GM12878 (cell line): ENCODE measurements at regions of chr3 and their contacts with region 1.

Region 1: GRCh38 chr3:28012830-28013229 is 228.6 kb upstream of the CMC1 start:
- DNase-seq: no peak
- ATAC-seq: no peak
- H3K4me3 ChIP-seq: no peak overlapping the region
- H3K27ac ChIP-seq: no peak overlapping the region
- H3K4me1 ChIP-seq: no peaks in the 10 kb centered on the region
- H3K27me3 ChIP-seq: no peaks in the 10 kb centered on the region
- CTCF ChIP-seq: no peak
- EP300 ChIP-seq: no peak
- POLR2A ChIP-seq: no peak
- RAD21 ChIP-seq: no peak

Region 2: DNA sequence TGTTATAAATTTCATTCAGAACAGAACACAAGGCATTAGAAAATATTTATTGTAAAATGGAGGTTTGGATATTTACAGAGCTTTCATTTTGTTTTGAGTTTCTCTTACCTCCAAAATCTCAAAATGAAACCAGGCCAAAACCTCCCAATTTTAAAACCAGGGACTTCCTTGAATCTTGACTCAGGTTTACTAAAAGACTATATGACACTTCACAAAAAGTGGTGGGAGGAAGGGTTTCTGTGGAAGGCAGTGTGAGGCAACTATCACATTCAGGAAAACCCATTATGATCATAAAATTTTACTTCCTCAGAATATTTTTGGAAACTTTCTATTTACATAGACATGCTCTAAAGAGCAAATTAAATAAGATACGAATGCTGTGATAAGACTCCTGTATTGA is 84.9 kb before region 1 on chr3:
- CTCF ChIA-PET with region 1: interaction called, 6 read pairs
- POLR2A ChIA-PET with region 1: interaction called, 7 read pairs
- RAD21 ChIA-PET with region 1: interaction called, 25 read pairs
- SMC1A ChIA-PET with region 1: interaction called, 20 read pairs
- in situ Hi-C with region 1: no loop called
- intact Hi-C with region 1: loop called (anchors 5 kb)
- DNase-seq: peak; percentile 4
- ATAC-seq: peak; percentile 36
- H3K4me3 ChIP-seq: no peak overlapping the region
- H3K27ac ChIP-seq: no peak overlapping the region
- H3K4me1 ChIP-seq: no peaks in the 10 kb centered on the region
- H3K27me3 ChIP-seq: no peaks in the 10 kb centered on the region
- CTCF ChIP-seq: no peak
- EP300 ChIP-seq: no peak
- POLR2A ChIP-seq: no peak
- RAD21 ChIP-seq: no peak

Region 3: GRCh38 chr3:28022916-28023315 is 10.1 kb after region 1 on chr3:
- CTCF ChIA-PET with region 1: interaction called, 8 read pairs
- POLR2A ChIA-PET with region 1: interaction called, 4 read pairs
- RAD21 ChIA-PET with region 1: interaction called, 21 read pairs
- SMC1A ChIA-PET with region 1: interaction called, 10 read pairs
- in situ Hi-C with region 1: no loop called
- intact Hi-C with region 1: no loop called
- DNase-seq: no peak
- ATAC-seq: 0 out of 3 replicates have a peak, but pooled peaks have one; percentile 8
- H3K4me3 ChIP-seq: no peak overlapping the region
- H3K27ac ChIP-seq: no peak overlapping the region
- H3K4me1 ChIP-seq: no peaks in the 10 kb centered on the region; the same call in 1 of the 2 replicates
- H3K27me3 ChIP-seq: no peaks in the 10 kb centered on the region
- CTCF ChIP-seq: no peak
- EP300 ChIP-seq: no peak
- POLR2A ChIP-seq: no peak
- RAD21 ChIP-seq: no peak

Region 4: DNA sequence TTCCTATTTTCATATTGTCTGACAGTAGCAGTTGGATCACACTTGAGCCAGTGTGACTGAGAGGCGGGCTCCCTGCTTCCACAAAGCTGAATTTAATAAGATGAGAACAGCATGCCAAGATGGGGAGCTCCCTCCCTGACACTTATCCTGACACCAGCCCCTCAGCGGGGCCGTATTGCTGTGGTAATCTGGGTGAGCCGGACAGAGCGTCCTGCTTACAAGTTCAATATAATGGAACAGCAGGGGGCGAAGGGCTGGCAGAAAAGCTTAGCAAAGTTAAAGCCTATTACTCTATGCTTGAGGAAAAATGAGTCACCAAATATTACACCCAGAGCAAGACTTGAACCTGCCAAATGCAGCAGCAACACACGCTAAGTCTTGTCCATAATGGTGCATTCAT is 64.7 kb after region 1 on chr3:
- CTCF ChIA-PET with region 1: interaction called, 9 read pairs
- POLR2A ChIA-PET with region 1: interaction called, 6 read pairs
- RAD21 ChIA-PET with region 1: interaction called, 9 read pairs
- SMC1A ChIA-PET with region 1: interaction called, 13 read pairs
- in situ Hi-C with region 1: no loop called
- intact Hi-C with region 1: no loop called
- DNase-seq: no peak
- ATAC-seq: no peak
- H3K4me3 ChIP-seq: no peak overlapping the region
- H3K27ac ChIP-seq: no peak overlapping the region
- H3K4me1 ChIP-seq: no peaks in the 10 kb centered on the region
- H3K27me3 ChIP-seq: no peaks in the 10 kb centered on the region
- CTCF ChIP-seq: no peak
- EP300 ChIP-seq: no peak
- POLR2A ChIP-seq: no peak
- RAD21 ChIP-seq: no peak

Region 5: DNA sequence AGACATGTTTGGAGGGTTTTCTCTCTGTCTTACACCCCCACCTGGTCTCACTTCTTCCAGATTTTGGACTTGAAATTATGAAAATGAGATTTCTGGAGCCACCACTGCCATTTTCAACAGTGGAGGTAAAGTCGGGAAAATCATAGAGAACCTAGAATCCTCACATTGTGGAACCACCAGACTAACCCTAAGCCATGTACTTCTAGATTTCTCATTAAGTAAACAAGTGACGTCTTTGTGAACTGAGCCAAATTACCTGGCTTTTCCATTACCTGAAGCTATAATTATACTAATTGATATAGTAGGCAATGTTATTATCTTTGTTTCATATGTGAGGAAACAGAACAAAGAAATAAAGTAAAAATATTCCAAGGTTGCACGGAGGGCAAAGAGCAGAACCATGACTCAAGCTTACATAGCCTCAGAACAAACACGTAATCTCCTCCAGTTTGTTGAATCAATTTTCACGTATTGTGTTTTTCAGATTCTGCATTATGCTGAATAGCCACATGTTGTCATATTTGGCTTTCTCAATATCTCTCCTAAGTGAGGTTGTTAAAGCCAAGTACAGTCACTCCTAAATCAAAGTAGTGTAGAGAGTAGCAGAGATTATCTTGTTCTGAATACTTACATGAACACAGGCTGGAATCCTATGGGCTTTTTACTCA is 127.3 kb after region 1 on chr3:
- CTCF ChIA-PET with region 1: interaction called, 3 read pairs
- POLR2A ChIA-PET with region 1: interaction called, 4 read pairs
- RAD21 ChIA-PET with region 1: interaction called, 248 read pairs
- SMC1A ChIA-PET with region 1: interaction called, 35 read pairs
- in situ Hi-C with region 1: no loop called
- intact Hi-C with region 1: no loop called
- DNase-seq: no peak
- ATAC-seq: peak; percentile 6
- H3K4me3 ChIP-seq: no peak overlapping the region
- H3K27ac ChIP-seq: no peak overlapping the region
- H3K4me1 ChIP-seq: no peaks in the 10 kb centered on the region
- H3K27me3 ChIP-seq: no peaks in the 10 kb centered on the region
- CTCF ChIP-seq: no peak
- EP300 ChIP-seq: no peak
- POLR2A ChIP-seq: no peak
- RAD21 ChIP-seq: no peak

Region 6: DNA sequence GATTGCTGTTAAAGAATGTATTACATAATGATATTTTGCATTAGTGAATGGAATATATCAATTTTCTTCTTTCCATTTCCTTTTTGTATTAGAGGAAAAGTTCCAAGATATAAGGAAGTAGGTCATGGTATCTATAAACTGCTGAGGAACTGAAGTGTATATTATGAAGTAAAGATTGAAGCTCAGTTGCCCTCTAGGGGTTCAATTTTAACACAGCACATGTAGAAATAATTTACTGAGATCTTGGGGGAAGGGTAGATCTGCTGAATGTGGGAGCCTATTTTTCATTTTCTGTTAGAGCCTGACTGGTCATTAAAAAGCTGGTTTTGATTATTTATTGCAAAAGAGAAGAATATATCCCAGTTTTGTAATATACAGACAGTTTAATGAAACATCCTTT is 273.8 kb after region 1 on chr3:
- CTCF ChIA-PET with region 1: interaction called, 8 read pairs
- POLR2A ChIA-PET with region 1: interaction called, 3 read pairs
- RAD21 ChIA-PET with region 1: interaction called, 4 read pairs
- SMC1A ChIA-PET with region 1: interaction called, 4 read pairs
- in situ Hi-C with region 1: no loop called
- intact Hi-C with region 1: loop called (anchors 5 kb)
- DNase-seq: peak; percentile 8
- ATAC-seq: peak; percentile 96
- H3K4me3 ChIP-seq: no peak overlapping the region
- H3K27ac ChIP-seq: no peak overlapping the region
- H3K4me1 ChIP-seq: no peaks in the 10 kb centered on the region
- H3K27me3 ChIP-seq: no peaks in the 10 kb centered on the region
- CTCF ChIP-seq: peak; percentile 48 to 63 (median 50); a peak in 5 of 6 replicates
- EP300 ChIP-seq: no peak
- POLR2A ChIP-seq: no peak
- RAD21 ChIP-seq: peak; percentile 73